ENCODE measurements at regions of chr7 and their contacts with region 1.

Region 1: DNA sequence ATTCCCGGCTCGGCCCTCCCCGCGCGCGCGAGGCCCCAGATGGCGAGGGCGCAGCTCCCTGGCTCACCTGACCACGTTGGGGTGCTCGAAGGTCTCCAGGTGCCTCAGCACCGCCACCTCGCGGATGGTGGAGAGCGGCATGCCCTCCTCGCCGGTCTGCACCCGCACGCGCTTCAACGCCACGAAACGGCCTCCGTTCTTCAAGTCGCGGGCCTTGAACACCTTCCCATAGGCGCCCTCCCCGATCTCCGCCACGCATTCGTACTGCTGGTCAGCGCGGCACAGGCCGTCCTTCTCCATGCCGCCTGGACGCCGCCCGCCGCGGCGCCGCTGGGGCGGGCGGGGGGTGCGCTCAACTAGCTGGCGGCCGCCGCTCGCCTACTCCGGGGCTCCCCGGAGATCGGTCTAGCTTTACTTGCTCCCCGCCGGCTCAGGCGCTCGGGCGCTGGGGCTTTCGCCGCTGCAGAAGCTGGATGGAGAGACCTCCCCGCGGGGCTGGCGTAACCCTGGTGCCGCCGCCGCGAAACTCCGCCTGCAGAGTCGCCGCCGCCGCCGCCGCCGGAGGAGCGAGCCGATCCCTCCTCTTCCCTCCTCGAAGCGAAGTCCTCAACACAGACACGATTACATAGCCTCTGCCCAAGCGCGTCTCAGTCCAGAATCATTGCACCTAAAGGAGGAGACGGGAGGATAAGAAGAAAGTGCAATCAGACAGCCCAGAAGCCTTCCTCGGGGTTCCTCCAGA is 3.2 kb downstream of the CDK6 start:
- DNase-seq: peak; percentile 92
- H3K4me3 ChIP-seq: peak overlapping the region; percentile 63 to 77
- H3K27ac ChIP-seq: peak overlapping the region; percentile 81 to 88
- H3K4me1 ChIP-seq: no peaks in the 10 kb centered on the region
- H3K27me3 ChIP-seq: no peaks in the 10 kb centered on the region
- CTCF ChIP-seq: peak; percentile 85 to 93 (median 91)
- POLR2A ChIP-seq: peak; percentile 25

Region 2: DNA sequence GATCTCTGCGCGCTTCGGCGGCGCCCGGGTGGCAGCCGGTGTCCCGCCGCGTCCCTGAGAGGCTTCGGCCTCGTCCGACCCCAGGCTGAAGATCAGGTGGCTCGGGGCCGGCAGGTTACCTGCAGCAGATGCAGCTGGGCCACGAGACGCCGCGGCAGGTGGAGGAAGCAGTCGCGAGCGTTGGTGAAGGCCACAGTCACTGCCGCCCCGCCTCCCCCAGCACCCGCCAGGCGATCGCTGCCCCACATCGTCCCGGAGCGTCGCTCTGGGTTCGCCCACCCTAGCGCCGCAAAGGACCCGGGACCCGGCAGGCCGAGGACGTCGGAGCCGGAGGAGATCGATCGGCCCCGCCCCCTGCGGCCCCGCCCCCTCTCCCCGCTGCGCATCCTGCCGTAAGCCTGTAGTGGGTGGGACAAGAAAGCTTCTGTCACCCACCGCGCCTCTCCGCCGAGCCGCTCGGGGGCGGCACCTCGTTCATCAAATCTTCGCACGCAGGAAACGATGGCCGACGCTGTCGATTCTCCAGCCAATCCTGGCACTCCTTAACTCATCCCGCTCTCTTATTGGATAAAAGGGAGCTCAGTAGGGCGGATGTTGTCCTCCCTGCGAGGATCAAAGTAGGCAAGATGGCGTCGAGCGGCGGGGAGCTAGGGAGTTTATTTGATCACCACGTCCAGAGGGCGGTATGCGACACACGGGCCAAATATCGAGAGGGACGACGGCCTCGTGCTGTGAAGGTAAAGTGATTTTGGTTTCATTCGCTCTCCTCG is 304.8 kb before region 1 on chr7 and contains the starts of genes PEX1 and RBM48:
- intact Hi-C with region 1: loop called (anchors 10 kb)
- DNase-seq: peak; percentile 97
- H3K4me3 ChIP-seq: peak within 1 kb of the TSS; percentile 69 to 74
- H3K27ac ChIP-seq: peak within 1 kb of the TSS; percentile 88 to 93
- H3K4me1 ChIP-seq: no peaks in the 10 kb centered on the region
- H3K27me3 ChIP-seq: no peaks in the 10 kb centered on the region
- CTCF ChIP-seq: peak; percentile 36 to 79 (median 68)
- POLR2A ChIP-seq: peak; percentile 53
- total RNA-seq, gene PEX1: 17.3 to 23.0 TPM
- total RNA-seq, gene RBM48: 8.5 to 13.7 TPM

Region 3: GRCh38 chr7:92621026-92621540 is 212.1 kb before region 1 on chr7:
- intact Hi-C with region 1: loop called (anchors 5 kb)
- DNase-seq: peak; percentile 68
- H3K4me3 ChIP-seq: no peak overlapping the region
- H3K27ac ChIP-seq: no peak overlapping the region
- H3K4me1 ChIP-seq: no peaks in the 10 kb centered on the region
- H3K27me3 ChIP-seq: no peaks in the 10 kb centered on the region
- CTCF ChIP-seq: peak; percentile 39 to 83 (median 80)
- POLR2A ChIP-seq: no peak

Region 4: GRCh38 chr7:92695308-92696261 is 137.6 kb before region 1 on chr7:
- intact Hi-C with region 1: loop called (anchors 2 kb)
- DNase-seq: peak; percentile 25
- H3K4me3 ChIP-seq: peak overlapping the region; percentile 26 to 39
- H3K27ac ChIP-seq: peak overlapping the region; percentile 63 to 64
- H3K4me1 ChIP-seq: no peaks in the 10 kb centered on the region
- H3K27me3 ChIP-seq: no peaks in the 10 kb centered on the region
- CTCF ChIP-seq: no peak
- POLR2A ChIP-seq: no peak

Region 5: DNA sequence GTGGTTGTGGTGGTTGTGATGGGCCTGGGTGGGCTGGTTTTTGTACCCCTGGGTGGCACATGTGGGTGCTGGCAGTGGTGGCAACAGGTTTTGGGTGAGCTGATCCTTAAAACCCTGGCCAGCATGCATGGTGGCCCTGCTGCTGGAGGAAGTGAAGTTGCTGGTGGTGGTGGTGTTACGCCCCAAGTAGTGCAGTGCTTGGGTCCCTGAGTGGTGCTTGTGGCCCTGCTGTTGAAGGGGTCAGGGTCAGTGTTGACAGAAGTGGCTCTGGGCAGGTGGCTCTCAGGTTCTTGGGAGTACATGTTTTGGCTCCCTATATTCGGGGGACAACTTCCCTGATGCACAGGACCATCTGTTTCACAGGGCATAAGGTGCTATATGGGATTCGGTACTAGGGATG is 253.6 kb after region 1 on chr7:
- intact Hi-C with region 1: no loop called
- DNase-seq: no peak
- H3K4me3 ChIP-seq: no peak overlapping the region
- H3K27ac ChIP-seq: no peak overlapping the region
- H3K4me1 ChIP-seq: no peaks in the 10 kb centered on the region
- H3K27me3 ChIP-seq: no peaks in the 10 kb centered on the region
- CTCF ChIP-seq: no peak
- POLR2A ChIP-seq: no peak